ENCODE measurements at regions of chr6 and their contacts with region 1.

Region 1: GRCh38 chr6:27472617-27473400 is at the start of gene ZNF184:
- DNase-seq: peak; percentile 74 to 88 (median 86)
- ATAC-seq: peak; percentile 88
- H3K4me3 ChIP-seq: peak within 1 kb of the TSS; percentile 85
- H3K4me3 Mint-ChIP-seq: peak within 1 kb of the TSS; percentile 85 to 98 (median 97)
- H3K27ac ChIP-seq: peak within 1 kb of the TSS; percentile 93
- H3K27ac Mint-ChIP-seq: peak within 1 kb of the TSS; percentile 90 to 99 (median 96)
- H3K4me1 ChIP-seq: peaks cover 13 to 23% of the 10 kb centered on the region in 2 donors
- H3K4me1 Mint-ChIP-seq: peaks cover 40 to 55% (median 52%) of the 10 kb centered on the region in 7 donors
- H3K27me3 ChIP-seq: no peaks in the 10 kb centered on the region
- H3K27me3 Mint-ChIP-seq: peaks cover 0 to 9% (median 0%) of the 10 kb centered on the region in 5 donors
- total RNA-seq, gene ZNF184: 9.6 to 13.7 (median 12.3) TPM

Region 2: DNA sequence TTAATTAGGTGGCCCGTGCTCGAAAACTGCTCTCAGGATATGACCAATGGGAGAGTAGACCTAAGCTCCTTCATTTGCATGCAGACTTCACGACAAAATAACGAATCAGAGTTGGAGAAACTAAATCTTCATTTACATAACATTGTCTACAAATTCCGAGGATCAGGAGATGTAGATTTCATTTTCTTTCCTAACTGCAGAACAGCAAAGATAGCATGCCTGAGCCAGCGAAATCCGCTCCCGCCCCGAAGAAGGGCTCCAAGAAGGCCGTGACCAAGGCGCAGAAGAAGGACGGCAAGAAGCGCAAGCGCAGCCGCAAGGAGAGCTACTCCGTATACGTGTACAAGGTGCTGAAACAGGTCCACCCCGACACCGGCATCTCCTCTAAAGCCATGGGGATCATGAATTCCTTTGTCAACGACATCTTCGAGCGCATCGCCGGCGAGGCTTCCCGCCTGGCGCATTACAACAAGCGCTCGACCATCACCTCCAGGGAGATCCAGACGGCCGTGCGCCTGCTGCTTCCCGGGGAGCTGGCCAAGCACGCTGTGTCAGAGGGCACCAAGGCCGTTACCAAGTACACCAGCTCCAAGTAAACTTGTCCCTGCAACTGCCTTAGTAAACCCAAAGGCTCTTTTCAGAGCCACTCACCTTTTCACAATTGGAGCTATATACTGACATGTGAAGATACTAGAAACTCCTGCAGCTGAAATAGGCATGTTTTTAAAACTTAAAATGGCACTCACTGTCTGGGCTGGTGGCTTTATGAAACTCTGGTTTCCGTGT is 1289.0 kb before region 1 on chr6:
- CTCF ChIA-PET with region 1: no interaction called
- POLR2A ChIA-PET with region 1: interaction called, 3 read pairs
- intact Hi-C with region 1: loop called (anchors 5 to 10 kb)
- DNase-seq: peak; percentile 43 to 83 (median 77)
- ATAC-seq: peak; percentile 91
- H3K4me3 ChIP-seq: peak overlapping the region; percentile 82
- H3K4me3 Mint-ChIP-seq: peak overlapping the region; percentile 84 to 99 (median 98)
- H3K27ac ChIP-seq: peak overlapping the region; percentile 76
- H3K27ac Mint-ChIP-seq: peak overlapping the region; percentile 83 to 99 (median 90)
- H3K4me1 ChIP-seq: peaks cover 13 to 30% of the 10 kb centered on the region in 2 donors
- H3K4me1 Mint-ChIP-seq: peaks cover 19 to 59% (median 49%) of the 10 kb centered on the region in 7 donors
- H3K27me3 ChIP-seq: no peaks in the 10 kb centered on the region
- H3K27me3 Mint-ChIP-seq: no peaks in the 10 kb centered on the region

Region 3: GRCh38 chr6:27312146-27312949 is 160.5 kb before region 1 on chr6 and contains the start of gene POM121L2:
- CTCF ChIA-PET with region 1: no interaction called
- POLR2A ChIA-PET with region 1: no interaction called
- intact Hi-C with region 1: loop called (anchors 2 to 10 kb)
- DNase-seq: peak in 8 of 9 donors; percentile 26 to 61 (median 56)
- ATAC-seq: peak; percentile 66
- H3K4me3 ChIP-seq: peak within 1 kb of the TSS; percentile 80
- H3K4me3 Mint-ChIP-seq: peak within 1 kb of the TSS; percentile 76 to 86 (median 83)
- H3K27ac ChIP-seq: no peak within 1 kb of the TSS
- H3K27ac Mint-ChIP-seq: peak within 1 kb of the TSS in 2 of 9 donors; percentile 15 to 25
- H3K4me1 ChIP-seq: peaks cover 0 to 6% of the 10 kb centered on the region in 2 donors
- H3K4me1 Mint-ChIP-seq: peaks cover 0 to 13% (median 4%) of the 10 kb centered on the region in 7 donors
- H3K27me3 ChIP-seq: peaks cover 4 to 14% of the 10 kb centered on the region in 2 donors
- H3K27me3 Mint-ChIP-seq: peaks cover 63 to 81% (median 73%) of the 10 kb centered on the region in 5 donors
- total RNA-seq, gene POM121L2: not detected

Region 4: DNA sequence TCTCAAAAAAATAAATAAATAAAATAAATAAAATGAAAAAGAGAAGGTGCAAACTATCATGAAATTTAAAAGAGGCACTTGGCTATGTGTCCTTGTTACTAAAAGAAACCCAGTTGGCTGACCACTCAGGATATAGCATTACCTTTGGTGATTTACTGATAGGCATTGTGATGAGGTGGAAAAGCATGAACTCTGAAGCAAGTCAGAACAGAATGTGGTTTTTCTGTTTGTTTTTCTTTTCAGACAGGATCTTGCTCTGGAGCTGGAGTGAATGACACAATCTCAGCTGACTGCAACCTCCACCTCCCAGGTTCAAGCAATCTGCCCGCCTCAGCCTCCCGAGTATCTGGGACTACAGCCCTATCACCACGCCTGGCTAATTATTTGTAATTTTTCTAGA is 31.8 kb before region 1 on chr6:
- CTCF ChIA-PET with region 1: no interaction called
- POLR2A ChIA-PET with region 1: no interaction called
- intact Hi-C with region 1: no loop called
- DNase-seq: no peak
- ATAC-seq: no peak
- H3K4me3 ChIP-seq: no peak overlapping the region
- H3K4me3 Mint-ChIP-seq: no peak overlapping the region
- H3K27ac ChIP-seq: no peak overlapping the region
- H3K27ac Mint-ChIP-seq: no peak overlapping the region
- H3K4me1 ChIP-seq: no peaks in the 10 kb centered on the region
- H3K4me1 Mint-ChIP-seq: no peaks in the 10 kb centered on the region
- H3K27me3 ChIP-seq: no peaks in the 10 kb centered on the region
- H3K27me3 Mint-ChIP-seq: peaks cover 0 to 6% (median 2%) of the 10 kb centered on the region in 5 donors

Region 5: DNA sequence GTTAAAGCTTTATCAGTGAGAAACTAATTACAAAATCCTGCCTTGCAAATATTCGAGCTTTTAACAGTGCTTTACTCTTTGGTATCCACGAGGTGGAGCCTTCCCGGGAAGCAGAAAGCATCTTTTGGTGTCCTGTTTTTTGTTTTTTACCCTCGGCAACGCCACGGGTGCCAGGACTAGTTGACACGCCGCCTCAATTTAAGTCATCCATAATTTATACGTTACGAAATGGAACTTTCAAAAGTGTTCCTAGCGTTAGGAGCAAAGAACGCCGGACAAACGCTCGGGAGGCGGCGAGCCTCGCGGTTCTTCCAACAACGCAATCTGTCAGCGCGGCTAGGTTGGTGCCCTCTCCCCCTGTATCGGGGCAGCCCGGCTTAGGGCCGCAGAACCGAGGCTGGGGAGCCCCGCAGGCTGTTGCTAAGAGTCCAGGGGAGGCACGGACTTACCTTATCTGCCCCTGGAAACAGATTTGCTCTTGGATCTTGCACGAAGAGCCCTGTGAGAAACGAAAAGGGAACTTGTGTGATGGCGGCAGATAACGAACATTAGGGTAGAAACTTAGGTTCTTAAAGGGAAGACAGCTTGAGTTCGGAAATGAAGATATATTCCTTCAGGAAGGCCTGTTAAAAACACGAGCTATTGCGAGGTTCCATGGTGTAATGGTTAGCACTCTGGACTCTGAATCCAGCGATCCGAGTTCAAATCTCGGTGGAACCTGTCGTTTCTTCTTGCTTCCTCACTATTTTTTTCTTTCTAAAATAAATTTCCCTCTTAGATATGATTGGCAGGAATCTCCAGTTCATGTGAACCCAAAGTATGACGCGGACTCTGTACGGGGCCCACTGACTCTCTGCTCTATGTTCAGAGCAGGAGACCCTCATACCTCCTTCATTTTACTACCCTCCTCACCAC is 46.3 kb after region 1 on chr6:
- CTCF ChIA-PET with region 1: no interaction called
- POLR2A ChIA-PET with region 1: interaction called, 20 read pairs
- intact Hi-C with region 1: loop called in 1 of 2 experiments (anchors 1 kb)
- DNase-seq: peak; percentile 34 to 79 (median 68)
- ATAC-seq: peak; percentile 81
- H3K4me3 ChIP-seq: peak overlapping the region; percentile 96
- H3K4me3 Mint-ChIP-seq: peak overlapping the region; percentile 84 to 97 (median 91)
- H3K27ac ChIP-seq: peak overlapping the region; percentile 67
- H3K27ac Mint-ChIP-seq: peak overlapping the region; percentile 68 to 94 (median 84)
- H3K4me1 ChIP-seq: peaks cover 7 to 11% of the 10 kb centered on the region in 2 donors
- H3K4me1 Mint-ChIP-seq: peaks cover 0 to 31% (median 18%) of the 10 kb centered on the region in 7 donors
- H3K27me3 ChIP-seq: peaks cover 0 to 3% of the 10 kb centered on the region in 2 donors
- H3K27me3 Mint-ChIP-seq: peaks cover 0 to 40% (median 22%) of the 10 kb centered on the region in 5 donors

Region 6: DNA sequence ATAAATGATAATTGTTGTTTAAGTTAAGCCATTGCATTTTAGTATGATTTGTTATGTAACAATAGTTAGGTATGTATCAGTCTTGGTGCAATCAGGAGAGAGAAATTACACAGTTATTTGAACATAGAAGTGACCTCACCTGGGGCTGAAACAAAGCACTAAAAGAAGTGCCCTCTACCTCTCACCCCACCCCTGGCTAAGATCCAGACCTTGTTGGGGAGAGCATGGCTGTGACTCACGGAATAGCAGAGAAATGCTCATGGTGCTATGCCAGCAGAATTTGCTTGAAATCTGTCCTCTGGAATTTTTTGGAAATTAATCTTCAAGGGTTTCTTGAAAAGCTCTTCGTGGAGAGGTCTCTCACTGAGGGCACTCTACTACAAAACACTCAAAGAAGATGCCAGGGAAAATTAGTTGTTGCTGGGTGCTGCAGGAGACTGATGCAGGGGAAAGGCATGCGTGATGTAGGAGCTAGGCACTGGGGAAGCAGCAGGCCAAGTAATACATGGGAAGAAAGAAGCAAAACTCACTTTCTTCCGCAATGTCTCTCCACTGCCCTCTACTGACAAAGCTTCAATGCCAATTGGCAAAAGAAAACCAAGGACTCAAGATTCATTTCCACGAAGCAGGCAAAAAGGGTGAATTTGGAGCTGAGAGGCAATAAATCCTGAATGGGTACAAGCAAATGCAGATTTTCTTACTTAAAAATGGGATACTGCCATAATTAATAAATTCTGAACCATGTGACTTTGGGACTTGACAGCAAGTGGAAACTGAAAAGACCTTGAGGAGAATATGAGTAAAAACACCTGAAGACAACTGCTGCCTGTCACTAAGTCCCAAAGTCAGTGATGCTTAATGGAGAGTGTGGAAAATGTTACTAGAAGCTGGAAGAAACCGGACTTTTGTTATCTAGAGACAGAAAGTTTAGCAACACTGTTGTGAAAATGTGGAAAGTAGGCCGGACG is 136.4 kb after region 1 on chr6:
- CTCF ChIA-PET with region 1: no interaction called
- POLR2A ChIA-PET with region 1: no interaction called
- intact Hi-C with region 1: no loop called
- DNase-seq: peak in 2 of 9 donors; percentile 19 to 33
- ATAC-seq: no peak
- H3K4me3 ChIP-seq: no peak overlapping the region
- H3K4me3 Mint-ChIP-seq: no peak overlapping the region
- H3K27ac ChIP-seq: no peak overlapping the region
- H3K27ac Mint-ChIP-seq: no peak overlapping the region
- H3K4me1 ChIP-seq: no peaks in the 10 kb centered on the region
- H3K4me1 Mint-ChIP-seq: peaks cover 0 to 17% (median 9%) of the 10 kb centered on the region in 7 donors
- H3K27me3 ChIP-seq: peaks cover 7 to 11% of the 10 kb centered on the region in 2 donors
- H3K27me3 Mint-ChIP-seq: peaks cover 44 to 73% (median 60%) of the 10 kb centered on the region in 5 donors

Region 7: DNA sequence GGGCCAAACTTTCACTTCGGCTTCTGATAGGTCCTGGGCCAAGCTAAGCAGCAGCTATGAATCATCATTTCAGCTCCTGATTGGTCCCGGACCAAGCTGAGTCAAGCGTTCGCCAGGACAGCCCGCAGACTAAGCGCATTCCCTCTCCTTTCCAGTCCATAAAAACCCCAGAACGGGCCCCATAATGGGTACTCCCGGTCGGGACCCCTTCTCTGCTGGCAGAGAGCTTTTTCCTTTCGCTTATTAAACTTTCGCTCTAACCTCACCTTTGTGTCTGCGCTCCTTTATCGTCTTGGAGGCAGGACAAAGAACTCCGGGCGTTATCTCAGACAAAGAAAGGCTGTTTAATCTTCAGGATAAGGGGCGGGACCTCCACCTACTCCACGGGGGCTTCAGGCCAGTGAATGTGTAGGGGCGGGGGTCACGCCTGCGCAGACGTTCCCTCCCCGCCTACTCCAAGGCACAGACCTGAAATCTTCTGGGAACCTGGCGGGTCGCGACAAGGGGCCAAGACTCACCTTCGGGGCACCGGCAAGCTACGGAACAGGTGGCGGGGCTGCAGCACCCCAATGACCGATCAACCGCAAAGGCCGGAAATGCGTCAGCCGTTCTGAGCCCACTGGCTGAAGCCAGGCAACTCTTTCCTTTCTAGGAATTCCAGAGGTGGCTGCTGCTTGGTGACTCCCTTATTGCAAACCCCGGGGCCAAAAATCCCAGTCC is 862.9 kb after region 1 on chr6 and contains the start of gene ZSCAN31:
- CTCF ChIA-PET with region 1: no interaction called
- POLR2A ChIA-PET with region 1: no interaction called
- intact Hi-C with region 1: loop called in 1 of 2 experiments (anchors 10 kb)
- DNase-seq: peak; percentile 43 to 87 (median 76)
- ATAC-seq: peak; percentile 95
- H3K4me3 ChIP-seq: peak within 1 kb of the TSS; percentile 97
- H3K4me3 Mint-ChIP-seq: peak within 1 kb of the TSS in 1 of 10 donors; percentile 58
- H3K27ac ChIP-seq: peak within 1 kb of the TSS; percentile 92
- H3K27ac Mint-ChIP-seq: peak within 1 kb of the TSS in 1 of 9 donors; percentile 47
- H3K4me1 ChIP-seq: peaks cover 9 to 10% of the 10 kb centered on the region in 2 donors
- H3K4me1 Mint-ChIP-seq: peaks cover 0 to 16% (median 9%) of the 10 kb centered on the region in 7 donors
- H3K27me3 ChIP-seq: no peaks in the 10 kb centered on the region
- H3K27me3 Mint-ChIP-seq: peaks cover 0 to 3% (median 0%) of the 10 kb centered on the region in 5 donors
- total RNA-seq, gene ZSCAN31: 0.93 to 2.4 (median 1.2) TPM

Region 8: GRCh38 chr6:28895134-28895812 is 1422.5 kb after region 1 on chr6:
- CTCF ChIA-PET with region 1: no interaction called
- POLR2A ChIA-PET with region 1: interaction called, 3 read pairs
- intact Hi-C with region 1: loop called (anchors 1 to 2 kb)
- DNase-seq: peak; percentile 72 to 95 (median 91)
- ATAC-seq: peak; percentile 83
- H3K4me3 ChIP-seq: peak overlapping the region; percentile 82
- H3K4me3 Mint-ChIP-seq: peak overlapping the region; percentile 92 to 100 (median 98)
- H3K27ac ChIP-seq: peak overlapping the region; percentile 99
- H3K27ac Mint-ChIP-seq: peak overlapping the region; percentile 98 to 100 (median 100)
- H3K4me1 ChIP-seq: peaks cover 5 to 6% of the 10 kb centered on the region in 2 donors
- H3K4me1 Mint-ChIP-seq: peaks cover 0 to 32% (median 14%) of the 10 kb centered on the region in 7 donors
- H3K27me3 ChIP-seq: no peaks in the 10 kb centered on the region
- H3K27me3 Mint-ChIP-seq: peaks cover 0 to 15% (median 0%) of the 10 kb centered on the region in 5 donors

Measured in naive thymus-derived CD4-positive, alpha-beta T cell (primary cell).